Natural killer cell (primary cell): ENCODE measurements at regions of chr6 and their contacts with region 1.

Region 1: GRCh38 chr6:1604158-1605030 is 5.3 kb upstream of the FOXC1 start:
- DNase-seq: peak; percentile 73 to 83
- ATAC-seq: peak; percentile 77 to 84 (median 78)
- H3K4me3 ChIP-seq: no peak overlapping the region
- H3K4me3 Mint-ChIP-seq: no peak overlapping the region
- H3K27ac ChIP-seq: no peak overlapping the region
- H3K27ac Mint-ChIP-seq: no peak overlapping the region
- H3K4me1 ChIP-seq: peaks cover 43% of the 10 kb centered on the region
- H3K4me1 Mint-ChIP-seq: peaks cover 29 to 32% of the 10 kb centered on the region in 2 donors
- H3K27me3 ChIP-seq: peaks cover 72% of the 10 kb centered on the region
- H3K27me3 Mint-ChIP-seq: peaks cover 69 to 76% of the 10 kb centered on the region in 2 donors
- CTCF ChIP-seq: peak; percentile 93

Region 2: DNA sequence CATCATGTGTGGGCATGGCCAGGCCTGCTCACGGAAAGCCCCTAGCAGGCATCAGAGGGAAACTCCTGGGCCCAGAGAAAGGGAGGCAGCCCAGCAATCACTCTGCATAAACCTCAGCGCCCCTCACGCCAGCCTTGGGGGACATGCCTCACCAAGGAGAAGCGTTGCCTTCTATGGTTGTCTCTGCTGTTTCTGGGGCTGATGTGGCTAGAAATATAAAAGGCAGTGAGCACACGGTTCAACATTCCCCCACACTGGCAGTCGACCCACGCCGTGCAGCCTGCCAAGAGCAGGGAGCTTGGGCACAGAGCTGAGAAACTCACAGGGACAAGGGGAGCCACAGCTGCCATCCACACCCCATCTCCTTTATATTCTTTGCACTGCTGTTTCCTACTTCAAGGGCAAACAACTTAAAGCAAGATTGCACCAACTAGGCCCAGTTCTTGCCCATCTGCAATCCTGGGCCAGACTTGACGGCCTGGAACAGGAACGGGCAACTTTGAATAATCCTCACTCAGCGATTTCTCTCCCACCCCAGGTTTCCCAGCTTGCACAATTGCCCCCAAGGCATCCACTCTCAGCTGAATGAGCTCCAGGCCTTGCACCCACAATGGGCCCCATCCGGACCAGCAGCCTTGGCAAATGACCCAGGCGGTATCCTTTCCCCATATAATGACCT is 30.2 kb before region 1 on chr6:
- intact Hi-C with region 1: no loop called
- DNase-seq: no peak
- ATAC-seq: no peak
- H3K4me3 ChIP-seq: no peak overlapping the region
- H3K4me3 Mint-ChIP-seq: no peak overlapping the region
- H3K27ac ChIP-seq: no peak overlapping the region
- H3K27ac Mint-ChIP-seq: no peak overlapping the region
- H3K4me1 ChIP-seq: no peaks in the 10 kb centered on the region
- H3K4me1 Mint-ChIP-seq: no peaks in the 10 kb centered on the region
- H3K27me3 ChIP-seq: no peaks in the 10 kb centered on the region
- H3K27me3 Mint-ChIP-seq: peaks cover 0 to 11% of the 10 kb centered on the region in 2 donors
- CTCF ChIP-seq: no peak

Region 3: GRCh38 chr6:2103644-2104523 is 499.5 kb after region 1 on chr6:
- intact Hi-C with region 1: loop called (anchors 2 kb)
- DNase-seq: peak in 1 of 2 donors; percentile 56
- ATAC-seq: peak in 1 of 3 donors; percentile 71
- H3K4me3 ChIP-seq: no peak overlapping the region
- H3K4me3 Mint-ChIP-seq: no peak overlapping the region
- H3K27ac ChIP-seq: no peak overlapping the region
- H3K27ac Mint-ChIP-seq: no peak overlapping the region
- H3K4me1 ChIP-seq: no peaks in the 10 kb centered on the region
- H3K4me1 Mint-ChIP-seq: peaks cover 5% of the 10 kb centered on the region in 2 donors
- H3K27me3 ChIP-seq: no peaks in the 10 kb centered on the region
- H3K27me3 Mint-ChIP-seq: peaks cover 0 to 5% of the 10 kb centered on the region in 2 donors
- CTCF ChIP-seq: peak; percentile 44

Region 4: GRCh38 chr6:2196079-2196679 is 591.8 kb after region 1 on chr6:
- intact Hi-C with region 1: loop called (anchors 2 kb)
- DNase-seq: peak in 1 of 2 donors; percentile 72
- ATAC-seq: peak; percentile 73 to 82 (median 78)
- H3K4me3 ChIP-seq: no peak overlapping the region
- H3K4me3 Mint-ChIP-seq: no peak overlapping the region
- H3K27ac ChIP-seq: no peak overlapping the region
- H3K27ac Mint-ChIP-seq: no peak overlapping the region
- H3K4me1 ChIP-seq: no peaks in the 10 kb centered on the region
- H3K4me1 Mint-ChIP-seq: no peaks in the 10 kb centered on the region
- H3K27me3 ChIP-seq: no peaks in the 10 kb centered on the region
- H3K27me3 Mint-ChIP-seq: no peaks in the 10 kb centered on the region
- CTCF ChIP-seq: peak; percentile 87

Region 5: DNA sequence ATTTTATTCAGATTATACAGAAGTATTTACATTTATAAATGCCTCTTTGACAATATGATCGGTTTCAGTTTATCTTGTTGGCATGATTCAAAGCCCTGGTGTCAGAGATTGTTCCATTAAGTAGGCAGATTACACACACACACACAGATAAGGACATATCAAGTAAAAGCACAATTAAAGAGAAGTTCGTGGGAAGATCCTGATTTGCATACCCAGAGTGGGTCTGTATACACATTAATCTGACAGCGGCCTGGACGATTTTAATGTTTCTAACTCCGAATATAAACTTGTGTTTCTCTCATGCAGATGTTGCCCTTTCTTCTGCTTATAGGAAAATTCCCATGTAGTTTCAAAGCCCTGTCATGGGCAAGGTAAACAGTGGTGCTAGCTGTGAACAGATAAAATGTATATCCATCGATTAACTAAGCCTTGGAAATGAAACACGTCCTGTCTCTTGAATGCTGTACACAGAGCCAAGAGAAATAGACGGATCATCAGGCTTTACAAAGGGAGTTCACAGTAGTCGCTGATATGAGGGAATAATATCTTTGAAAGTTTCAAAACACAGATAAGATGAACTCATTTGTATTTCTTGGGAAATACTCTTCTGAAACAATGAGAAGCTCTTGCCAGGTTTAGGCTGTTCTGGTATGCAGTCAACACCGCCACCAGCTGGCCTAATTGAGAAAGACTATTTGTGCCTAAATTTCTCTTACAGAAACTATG is 749.2 kb after region 1 on chr6:
- intact Hi-C with region 1: loop called (anchors 1 kb)
- DNase-seq: peak; percentile 18 to 66
- ATAC-seq: peak in 1 of 3 donors; percentile 61
- H3K4me3 ChIP-seq: no peak overlapping the region
- H3K4me3 Mint-ChIP-seq: no peak overlapping the region
- H3K27ac ChIP-seq: no peak overlapping the region
- H3K27ac Mint-ChIP-seq: no peak overlapping the region
- H3K4me1 ChIP-seq: no peaks in the 10 kb centered on the region
- H3K4me1 Mint-ChIP-seq: no peaks in the 10 kb centered on the region
- H3K27me3 ChIP-seq: no peaks in the 10 kb centered on the region
- H3K27me3 Mint-ChIP-seq: no peaks in the 10 kb centered on the region
- CTCF ChIP-seq: peak; percentile 69

Region 6: GRCh38 chr6:2634139-2634964 is 1030.0 kb after region 1 on chr6:
- intact Hi-C with region 1: loop called (anchors 2 kb)
- DNase-seq: peak; percentile 74 to 89
- ATAC-seq: peak; percentile 91 to 99 (median 96)
- H3K4me3 ChIP-seq: peak overlapping the region; percentile 27
- H3K4me3 Mint-ChIP-seq: peak overlapping the region; percentile 81
- H3K27ac ChIP-seq: no peak overlapping the region
- H3K27ac Mint-ChIP-seq: no peak overlapping the region
- H3K4me1 ChIP-seq: peaks cover 8% of the 10 kb centered on the region
- H3K4me1 Mint-ChIP-seq: peaks cover 0 to 5% of the 10 kb centered on the region in 2 donors
- H3K27me3 ChIP-seq: peaks cover 2% of the 10 kb centered on the region
- H3K27me3 Mint-ChIP-seq: peaks cover 11 to 20% of the 10 kb centered on the region in 2 donors
- CTCF ChIP-seq: peak; percentile 98